ENCODE measurements at regions of chr9 and their contacts with region 1.

Region 1: GRCh38 chr9:126722252-126723078 is 82.4 kb upstream of the ZBTB43 start:
- DNase-seq: peak; percentile 93
- H3K4me3 Mint-ChIP-seq: peak overlapping the region; percentile 84
- H3K27ac Mint-ChIP-seq: peak overlapping the region; percentile 82
- H3K4me1 Mint-ChIP-seq: peaks cover 35% of the 10 kb centered on the region
- H3K27me3 Mint-ChIP-seq: no peaks in the 10 kb centered on the region

Region 2: DNA sequence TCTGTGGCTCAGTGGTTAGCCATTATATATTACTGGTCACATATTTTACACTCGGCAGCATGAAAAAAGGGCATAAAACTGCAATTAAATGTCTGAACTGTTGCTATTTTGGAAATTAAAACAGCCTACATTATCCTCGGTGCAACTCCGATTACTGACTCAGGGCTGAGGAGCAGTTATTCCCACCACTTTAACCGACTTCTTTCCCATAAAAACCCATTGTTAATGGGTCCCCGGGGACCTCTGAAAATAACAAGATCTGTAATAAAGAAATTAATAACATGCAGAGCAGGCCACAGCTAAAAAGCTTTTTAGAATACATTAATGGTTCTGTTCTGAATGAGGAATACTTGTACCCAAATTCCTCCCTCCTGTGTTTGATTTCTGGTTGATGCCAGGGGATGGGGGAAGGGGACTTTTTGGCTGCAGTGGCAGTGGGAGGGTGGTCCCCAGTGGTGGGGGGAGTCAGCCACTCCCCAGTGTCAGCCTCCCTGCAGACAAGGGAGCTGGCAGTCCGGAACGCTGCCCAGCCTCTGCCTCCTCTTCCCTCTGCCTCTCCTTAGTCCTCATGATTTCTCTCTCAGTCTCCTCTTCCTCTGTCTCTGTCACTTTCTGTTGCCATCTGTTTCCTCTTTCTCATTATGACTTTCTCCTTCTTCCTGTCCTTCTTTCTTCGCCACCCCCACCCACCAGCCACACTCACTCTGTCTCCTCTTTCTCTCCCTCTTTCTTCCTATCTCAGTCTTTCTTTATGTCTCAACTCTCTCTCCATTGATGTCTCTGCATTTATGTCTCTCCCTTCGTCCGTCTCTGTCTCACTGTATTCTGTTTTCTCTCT is 23.3 kb after region 1 on chr9:
- CTCF ChIA-PET with region 1: interaction called, 3 read pairs
- intact Hi-C with region 1: loop called (anchors 1 kb)
- DNase-seq: peak; percentile 45
- H3K4me3 Mint-ChIP-seq: no peak overlapping the region
- H3K27ac Mint-ChIP-seq: peak overlapping the region; percentile 28
- H3K4me1 Mint-ChIP-seq: peaks cover 29% of the 10 kb centered on the region
- H3K27me3 Mint-ChIP-seq: no peaks in the 10 kb centered on the region

Region 3: DNA sequence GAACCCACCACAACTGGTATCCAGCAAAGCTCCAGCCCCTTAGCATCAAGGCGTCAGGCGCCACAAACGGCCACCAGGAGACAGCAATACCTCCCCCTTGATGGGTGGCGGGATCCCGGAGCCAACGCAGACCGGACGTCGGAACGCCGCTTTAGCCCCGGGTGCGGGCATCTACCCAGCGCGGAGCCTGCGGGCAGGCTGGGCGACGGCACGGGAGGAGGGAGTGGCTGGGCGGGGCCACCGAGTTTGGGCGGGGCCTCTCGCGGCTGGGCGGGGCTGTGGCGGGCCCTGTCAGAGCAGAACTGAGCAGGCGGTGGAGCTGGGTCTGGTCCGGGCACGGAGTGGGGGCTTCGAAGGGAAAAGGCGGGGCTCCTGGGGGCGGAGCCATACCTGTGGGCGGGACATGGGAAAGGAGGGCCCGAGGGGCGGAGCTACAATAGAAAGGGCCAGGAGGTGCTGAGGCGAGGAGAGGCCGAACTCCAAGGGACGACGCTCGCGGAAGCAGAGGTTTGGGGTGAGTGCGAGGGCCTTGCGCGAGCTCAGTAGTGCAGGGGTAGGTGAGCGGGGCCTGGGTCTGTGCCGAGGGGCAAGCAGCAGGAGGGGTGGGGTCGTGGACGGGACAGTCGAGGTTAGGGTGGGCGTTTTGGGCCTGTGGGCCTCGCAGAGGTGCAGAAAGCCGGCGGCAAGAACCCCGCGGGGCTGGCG is 501.9 kb after region 1 on chr9:
- CTCF ChIA-PET with region 1: no interaction called
- intact Hi-C with region 1: loop called (anchors 2 kb)
- DNase-seq: peak; percentile 85
- H3K4me3 Mint-ChIP-seq: peak overlapping the region; percentile 73
- H3K27ac Mint-ChIP-seq: no peak overlapping the region
- H3K4me1 Mint-ChIP-seq: peaks cover 28% of the 10 kb centered on the region
- H3K27me3 Mint-ChIP-seq: peaks cover 9% of the 10 kb centered on the region